ENCODE measurements at regions of chr11 and their contacts with region 1.

Region 1: GRCh38 chr11:6362873-6363678 is 27.2 kb upstream of the SMPD1 start:
- DNase-seq: peak; percentile 82
- H3K4me3 Mint-ChIP-seq: no peak overlapping the region
- H3K27ac Mint-ChIP-seq: no peak overlapping the region
- H3K4me1 Mint-ChIP-seq: no peaks in the 10 kb centered on the region
- H3K27me3 Mint-ChIP-seq: peaks cover 8% of the 10 kb centered on the region

Region 2: DNA sequence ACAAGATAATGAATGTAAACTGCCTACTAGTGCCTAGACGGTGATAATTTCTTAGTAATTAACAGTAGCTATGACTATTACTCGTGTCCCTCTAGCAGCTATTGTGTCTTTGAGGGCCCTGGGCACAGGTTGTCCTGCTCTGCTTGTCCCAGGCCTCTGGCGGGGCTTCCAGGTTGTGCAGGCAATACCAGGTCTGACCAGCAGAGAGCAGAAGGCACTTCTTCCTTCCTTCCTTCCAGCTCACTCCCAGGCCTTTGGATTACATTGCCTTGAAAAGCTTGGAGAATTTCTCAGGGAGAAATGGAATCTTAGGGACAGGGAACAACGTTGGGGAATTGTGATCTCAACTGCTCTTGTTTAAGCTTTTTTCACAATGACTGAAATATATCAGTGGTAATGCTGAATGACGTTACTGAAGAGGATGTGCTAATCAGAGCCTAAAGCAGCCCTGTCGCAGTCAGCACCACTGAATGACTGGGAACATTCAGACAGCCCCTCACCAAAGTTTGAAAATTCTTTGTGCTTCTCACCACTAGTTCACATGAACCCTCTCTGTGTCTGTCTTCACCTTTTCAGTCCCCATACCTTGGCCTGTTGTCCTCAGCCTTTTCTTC is 111.8 kb before region 1 on chr11:
- CTCF ChIA-PET with region 1: interaction called, 59 read pairs
- DNase-seq: peak; percentile 67
- H3K4me3 Mint-ChIP-seq: no peak overlapping the region
- H3K27ac Mint-ChIP-seq: no peak overlapping the region
- H3K4me1 Mint-ChIP-seq: no peaks in the 10 kb centered on the region
- H3K27me3 Mint-ChIP-seq: peaks cover 23% of the 10 kb centered on the region

Region 3: DNA sequence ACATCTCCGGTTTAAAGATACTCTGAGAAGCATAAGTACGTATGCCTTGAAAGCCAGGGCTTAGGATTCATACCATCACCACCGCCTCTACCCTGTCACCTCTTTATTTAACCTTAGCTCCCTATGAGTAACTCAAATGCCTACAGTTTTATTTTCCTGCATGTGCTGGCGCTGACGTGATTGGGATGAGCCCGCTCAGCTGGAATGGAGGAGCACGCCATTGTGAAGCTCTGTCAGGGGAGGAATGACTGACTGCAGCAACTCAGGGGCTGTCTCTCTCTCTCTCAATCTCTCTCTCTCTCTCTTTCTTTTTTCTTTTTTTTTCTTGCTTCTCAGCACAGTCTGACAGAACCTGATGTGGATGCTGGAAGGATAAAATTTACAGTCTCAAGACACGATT is 55.2 kb before region 1 on chr11:
- CTCF ChIA-PET with region 1: interaction called, 35 read pairs
- DNase-seq: no peak
- H3K4me3 Mint-ChIP-seq: no peak overlapping the region
- H3K27ac Mint-ChIP-seq: no peak overlapping the region
- H3K4me1 Mint-ChIP-seq: no peaks in the 10 kb centered on the region
- H3K27me3 Mint-ChIP-seq: peaks cover 30% of the 10 kb centered on the region

Region 4: DNA sequence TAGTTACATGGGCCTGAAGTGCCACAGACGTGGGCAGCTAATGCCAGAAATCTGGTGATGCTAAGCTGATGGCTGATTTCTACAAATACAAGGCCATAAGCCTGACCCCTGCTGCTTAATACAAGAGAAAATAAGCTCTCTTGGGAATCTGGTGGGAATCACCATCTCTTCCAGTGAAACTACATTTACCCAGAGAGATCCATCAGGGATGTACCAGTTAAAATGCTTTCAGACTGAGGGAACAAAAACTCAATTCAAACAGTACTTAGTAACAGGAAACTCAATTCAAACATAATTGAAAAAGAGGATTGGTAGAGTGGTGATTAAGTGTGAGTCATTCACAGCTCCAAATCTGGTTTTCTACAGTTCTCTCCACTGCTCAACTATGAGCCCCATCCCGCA is 41.1 kb before region 1 on chr11:
- CTCF ChIA-PET with region 1: interaction called, 35 read pairs
- DNase-seq: no peak
- H3K4me3 Mint-ChIP-seq: no peak overlapping the region
- H3K27ac Mint-ChIP-seq: peak overlapping the region; percentile 47
- H3K4me1 Mint-ChIP-seq: peaks cover 30% of the 10 kb centered on the region
- H3K27me3 Mint-ChIP-seq: peaks cover 49% of the 10 kb centered on the region